Activated T-helper 2 cell treated with anti-CD3 and anti-CD28 coated beads, Interferon-gamma antibody, Interleukin-2, Interleukin-4, amounts not matched to agents 10 μg/mL and 5 μg/mL and 100 μg/mL, durations not matched to agents 14 hours and 24 hours and 36 hours (primary cell): ENCODE measurements at regions of chr7 and their contacts with region 1.

Region 1: DNA sequence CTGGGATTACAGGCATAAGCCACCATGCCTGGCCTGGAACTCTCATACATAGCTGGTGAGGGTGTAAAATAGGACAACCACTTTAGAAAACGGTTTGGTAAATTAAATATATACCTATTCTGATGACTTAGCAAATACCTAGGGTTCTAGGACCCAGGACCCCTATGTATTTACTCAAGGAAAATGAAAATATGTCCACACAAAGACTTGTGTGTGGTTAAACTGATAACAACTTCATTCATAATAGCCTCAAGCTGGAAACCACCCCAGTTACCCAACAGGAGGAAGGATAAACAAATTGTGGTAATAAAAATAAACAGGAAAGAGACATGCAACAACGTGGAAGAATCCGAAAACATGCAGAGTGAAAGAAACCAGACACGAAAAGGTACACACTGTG is 52.6 kb downstream of the CARD11 start:
- DNase-seq: no peak
- H3K4me3 Mint-ChIP-seq: no peak overlapping the region
- H3K27ac Mint-ChIP-seq: no peak overlapping the region
- H3K4me1 Mint-ChIP-seq: peaks cover 2% of the 10 kb centered on the region
- H3K27me3 Mint-ChIP-seq: no peaks in the 10 kb centered on the region

Region 2: DNA sequence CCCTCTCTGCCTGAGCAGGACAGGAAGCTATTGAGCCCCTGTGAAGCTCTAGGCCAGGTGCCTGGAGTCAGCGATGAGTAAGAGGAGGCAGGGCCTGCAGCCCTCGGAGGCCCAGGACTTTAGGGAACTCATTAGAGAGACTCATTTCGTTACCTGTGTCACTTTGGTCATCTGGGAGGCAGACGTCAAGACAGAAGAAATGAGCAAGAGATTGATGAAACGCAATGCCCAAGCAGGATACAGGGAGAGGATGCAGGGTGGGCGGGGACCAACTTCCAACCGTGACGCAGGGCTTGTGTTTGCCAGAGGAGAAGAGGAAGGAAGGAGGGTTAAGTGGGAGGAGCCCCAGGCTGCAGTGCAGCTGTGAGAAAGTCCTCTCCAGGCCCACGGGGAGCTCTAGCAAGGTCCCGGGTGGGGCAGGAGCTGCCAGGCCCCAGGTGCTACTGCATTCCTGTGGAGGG is 120.5 kb before region 1 on chr7:
- intact Hi-C with region 1: no loop called
- DNase-seq: peak; percentile 51
- H3K4me3 Mint-ChIP-seq: peak overlapping the region; percentile 10
- H3K27ac Mint-ChIP-seq: peak overlapping the region; percentile 40
- H3K4me1 Mint-ChIP-seq: peaks cover 27% of the 10 kb centered on the region
- H3K27me3 Mint-ChIP-seq: no peaks in the 10 kb centered on the region

Region 3: DNA sequence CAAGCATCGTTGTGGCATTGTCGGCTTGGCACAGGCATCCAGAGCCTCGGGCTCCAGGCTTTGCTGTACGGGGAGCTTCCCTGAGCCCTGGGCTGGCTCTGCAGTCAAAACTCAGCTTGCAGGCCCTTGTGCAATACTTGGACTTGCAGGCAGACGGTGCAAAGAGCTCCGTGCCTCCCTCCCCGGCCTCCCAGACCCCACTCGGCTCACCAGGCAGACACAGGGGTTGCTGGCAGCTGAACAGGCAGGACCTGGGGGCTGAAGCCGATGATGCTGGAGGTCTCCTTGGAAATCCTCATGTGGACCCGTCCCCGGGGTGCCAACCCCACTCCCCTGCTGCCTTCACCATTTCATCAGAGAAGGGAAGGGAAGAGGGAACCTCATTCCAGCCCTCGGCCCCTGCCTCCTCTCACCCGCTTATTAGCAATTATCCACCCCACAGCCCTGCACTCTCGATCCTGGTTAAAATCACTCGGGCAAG is 87.3 kb before region 1 on chr7:
- intact Hi-C with region 1: no loop called
- DNase-seq: no peak
- H3K4me3 Mint-ChIP-seq: no peak overlapping the region
- H3K27ac Mint-ChIP-seq: no peak overlapping the region
- H3K4me1 Mint-ChIP-seq: peaks cover 12% of the 10 kb centered on the region
- H3K27me3 Mint-ChIP-seq: no peaks in the 10 kb centered on the region

Region 4: GRCh38 chr7:3005257-3005656 is 14.2 kb after region 1 on chr7:
- intact Hi-C with region 1: no loop called
- DNase-seq: no peak
- H3K4me3 Mint-ChIP-seq: no peak overlapping the region
- H3K27ac Mint-ChIP-seq: no peak overlapping the region
- H3K4me1 Mint-ChIP-seq: peaks cover 15% of the 10 kb centered on the region
- H3K27me3 Mint-ChIP-seq: no peaks in the 10 kb centered on the region

Region 5: DNA sequence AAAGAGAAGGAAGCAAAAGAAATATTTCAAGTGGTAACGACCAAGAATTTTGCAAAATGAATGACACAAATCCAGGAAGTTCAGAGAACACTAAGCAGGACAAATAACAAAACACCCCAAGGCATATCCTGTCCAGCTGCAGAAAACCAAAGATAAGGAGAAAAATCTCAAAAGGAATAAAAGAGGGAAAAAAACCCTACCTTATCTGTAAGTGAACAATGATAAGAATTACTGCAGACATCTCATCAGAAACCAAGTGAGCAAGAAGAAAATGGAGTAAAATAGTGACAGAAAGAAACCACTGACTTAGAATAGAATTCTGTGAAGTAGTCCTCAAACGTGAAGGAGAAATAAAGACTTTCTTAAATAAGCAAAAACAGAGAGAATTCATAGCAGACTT is 30.8 kb after region 1 on chr7:
- intact Hi-C with region 1: loop called (anchors 2 kb)
- DNase-seq: no peak
- H3K4me3 Mint-ChIP-seq: no peak overlapping the region
- H3K27ac Mint-ChIP-seq: no peak overlapping the region
- H3K4me1 Mint-ChIP-seq: peaks cover 6% of the 10 kb centered on the region
- H3K27me3 Mint-ChIP-seq: no peaks in the 10 kb centered on the region